ENCODE measurements at regions of chr15 and their contacts with region 1.

Region 1: DNA sequence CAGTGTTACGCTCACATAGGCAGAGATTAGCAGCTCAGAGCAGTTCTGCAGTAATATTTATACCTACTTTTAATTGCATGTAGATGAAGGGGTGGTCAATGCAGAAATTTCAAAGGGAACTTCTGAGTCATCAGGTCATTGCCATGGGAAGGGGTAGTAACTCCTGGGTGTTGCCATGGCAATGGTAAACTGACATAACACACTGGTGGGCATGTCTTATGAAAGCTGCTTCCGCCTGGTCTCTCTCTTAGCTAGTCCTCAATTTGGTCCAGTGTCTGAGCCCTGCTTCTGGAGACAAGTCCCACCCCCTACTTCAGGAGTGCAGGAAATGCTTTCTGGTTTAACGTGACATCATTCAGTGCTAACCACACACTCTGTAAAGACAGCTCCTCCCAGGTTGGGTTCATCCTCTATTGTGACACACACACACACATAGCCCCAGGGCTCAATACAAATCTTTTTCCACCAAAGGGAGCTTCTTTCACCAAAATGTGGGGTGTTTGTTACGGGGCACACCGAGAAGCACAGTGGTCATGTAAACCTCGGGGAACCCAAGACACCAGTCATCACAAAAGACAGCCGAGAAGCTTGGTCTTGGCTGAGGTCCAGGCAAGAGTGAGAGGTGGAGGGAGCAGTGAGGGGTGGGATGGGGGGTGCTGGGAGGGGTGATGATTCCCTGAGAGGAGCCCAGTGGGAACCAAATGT is 74.5 kb downstream of the TLE3 start:
- H3K4me3 ChIP-seq: no peak overlapping the region
- H3K27ac ChIP-seq: peak overlapping the region; percentile 68; the same call in 1 of the 2 replicates
- H3K4me1 ChIP-seq: peaks cover 21% of the 10 kb centered on the region
- CTCF ChIP-seq: no peak

Region 2: DNA sequence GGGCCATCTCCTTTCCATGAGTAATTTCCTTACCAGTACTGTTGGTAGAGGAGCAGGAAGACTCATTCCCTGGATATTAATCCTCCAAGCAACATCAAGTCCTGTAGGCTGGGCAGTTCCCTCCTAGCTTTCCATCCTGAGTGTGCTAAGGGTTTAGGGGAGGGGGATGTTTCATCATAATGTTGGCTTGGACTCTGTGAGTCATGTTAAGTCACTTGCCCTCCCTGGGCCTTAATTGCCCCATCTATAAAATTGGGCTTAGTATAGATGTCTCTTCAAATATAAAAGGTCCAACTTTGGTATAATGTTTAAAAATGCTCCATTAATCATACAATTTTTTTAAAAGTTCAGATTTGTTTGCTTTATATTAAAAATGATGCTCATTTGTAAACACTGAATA is 21.8 kb after region 1 on chr15:
- CTCF ChIA-PET with region 1: interaction called, 3 read pairs
- POLR2A ChIA-PET with region 1: interaction called, 10 read pairs
- H3K4me3 ChIP-seq: no peak overlapping the region
- H3K27ac ChIP-seq: no peak overlapping the region
- H3K4me1 ChIP-seq: no peaks in the 10 kb centered on the region
- CTCF ChIP-seq: no peak

Region 3: GRCh38 chr15:70060993-70061305 is 37.7 kb after region 1 on chr15:
- CTCF ChIA-PET with region 1: no interaction called
- POLR2A ChIA-PET with region 1: no interaction called
- H3K4me3 ChIP-seq: no peak overlapping the region
- H3K27ac ChIP-seq: no peak overlapping the region
- H3K4me1 ChIP-seq: peaks cover 34% of the 10 kb centered on the region
- CTCF ChIP-seq: no peak